Aorta (tissue), 5 donors: ENCODE measurements at regions of chr6 and their contacts with region 1.

Region 1: GRCh38 chr6:3013479-3013878 is 13.8 kb downstream of the NQO2 start:
- DNase-seq: peak in 1 of 2 donors; percentile 71
- ATAC-seq: peak; percentile 52
- H3K4me3 ChIP-seq: no peak overlapping the region
- H3K27ac ChIP-seq: no peak overlapping the region
- H3K4me1 ChIP-seq: no peaks in the 10 kb centered on the region
- H3K27me3 ChIP-seq: no peaks in the 10 kb centered on the region

Region 2: GRCh38 chr6:2931970-2932748 is 81.3 kb before region 1 on chr6:
- intact Hi-C with region 1: no loop called
- DNase-seq: peak; percentile 81 to 89
- ATAC-seq: peak; percentile 85
- H3K4me3 ChIP-seq: no peak overlapping the region
- H3K27ac ChIP-seq: no peak overlapping the region
- H3K4me1 ChIP-seq: no peaks in the 10 kb centered on the region
- H3K27me3 ChIP-seq: no peaks in the 10 kb centered on the region

Region 3: DNA sequence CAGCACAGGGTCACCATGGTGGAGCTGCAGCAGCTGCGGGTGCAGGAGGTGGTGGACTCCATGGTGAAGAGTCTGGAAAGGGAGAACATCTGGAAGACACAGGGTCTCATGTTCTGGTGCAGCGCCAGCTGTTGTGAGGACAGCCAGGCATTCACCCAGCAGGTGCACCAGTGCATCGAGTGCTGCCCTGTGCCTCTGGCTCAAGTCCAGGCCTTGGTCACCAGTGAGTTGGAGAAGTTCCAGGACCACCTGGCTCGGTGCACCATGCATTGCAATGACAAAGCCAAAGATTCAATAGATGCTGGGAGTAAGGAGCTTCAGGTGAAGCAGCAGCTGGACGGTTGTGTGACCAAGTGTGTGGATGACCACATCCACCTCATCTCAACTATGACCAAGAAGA is 31.9 kb after region 1 on chr6:
- intact Hi-C with region 1: loop called in 1 of 2 experiments (anchors 5 kb)
- DNase-seq: no peak
- ATAC-seq: no peak
- H3K4me3 ChIP-seq: no peak overlapping the region
- H3K27ac ChIP-seq: no peak overlapping the region
- H3K4me1 ChIP-seq: no peaks in the 10 kb centered on the region
- H3K27me3 ChIP-seq: no peaks in the 10 kb centered on the region

Region 4: GRCh38 chr6:3410385-3411360 is 397.2 kb after region 1 on chr6:
- intact Hi-C with region 1: no loop called
- DNase-seq: peak in 1 of 2 donors; percentile 72
- ATAC-seq: no peak
- H3K4me3 ChIP-seq: no peak overlapping the region
- H3K27ac ChIP-seq: no peak overlapping the region
- H3K4me1 ChIP-seq: no peaks in the 10 kb centered on the region
- H3K27me3 ChIP-seq: no peaks in the 10 kb centered on the region